Activated CD8-positive, alpha-beta T cell treated with anti-CD3 and anti-CD28 coated beads for 36 hours (primary cell): ENCODE measurements at regions of chr2 and their contacts with region 1.

Region 1: DNA sequence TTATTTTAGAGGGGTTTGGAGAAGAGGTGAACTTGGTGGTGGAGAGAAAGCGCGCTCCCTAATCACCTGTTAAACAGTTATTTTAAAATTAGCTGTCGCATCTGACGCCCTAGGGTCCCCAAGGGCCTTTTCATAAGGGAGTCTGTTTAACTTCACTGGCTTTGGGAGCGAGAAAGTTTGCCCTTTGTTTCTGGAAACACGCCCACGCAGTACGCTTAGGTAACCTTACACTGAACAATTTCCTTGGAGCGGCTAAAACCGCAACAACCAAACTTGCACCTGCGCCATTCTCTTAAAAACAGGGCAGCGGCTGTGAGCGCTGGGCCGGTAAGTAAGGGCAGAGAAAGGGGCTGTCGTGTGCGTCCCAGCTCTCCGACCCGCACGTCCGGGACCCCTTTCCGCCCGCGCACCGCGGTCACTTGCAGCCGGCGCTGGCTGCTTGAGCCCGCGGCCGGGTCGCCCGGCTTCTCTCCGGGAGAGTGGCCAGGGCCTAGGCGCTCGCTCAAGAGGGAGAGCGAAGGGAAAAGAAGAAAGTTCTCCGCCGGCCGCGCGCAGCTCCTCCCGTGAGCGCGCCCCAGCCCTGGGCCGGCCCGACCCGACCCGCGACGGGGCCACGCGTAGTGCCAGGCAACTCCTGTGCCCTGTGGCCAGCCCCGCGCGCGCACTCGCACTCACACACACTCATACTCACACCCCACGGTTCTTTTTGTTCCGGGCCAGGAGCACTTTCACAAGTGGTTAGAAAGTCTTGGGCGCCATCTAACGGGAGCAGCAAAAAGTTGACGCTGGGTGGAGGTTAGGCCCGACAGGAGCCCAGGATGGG is 19.2 kb downstream of the POU3F3 start:
- DNase-seq: peak; percentile 70
- ATAC-seq: peak; percentile 87
- H3K4me3 Mint-ChIP-seq: peak overlapping the region; percentile 56
- H3K27ac Mint-ChIP-seq: no peak overlapping the region
- H3K4me1 Mint-ChIP-seq: peaks cover 12% of the 10 kb centered on the region
- H3K27me3 Mint-ChIP-seq: peaks cover 66% of the 10 kb centered on the region
- CTCF ChIP-seq: peak; percentile 62

Region 2: DNA sequence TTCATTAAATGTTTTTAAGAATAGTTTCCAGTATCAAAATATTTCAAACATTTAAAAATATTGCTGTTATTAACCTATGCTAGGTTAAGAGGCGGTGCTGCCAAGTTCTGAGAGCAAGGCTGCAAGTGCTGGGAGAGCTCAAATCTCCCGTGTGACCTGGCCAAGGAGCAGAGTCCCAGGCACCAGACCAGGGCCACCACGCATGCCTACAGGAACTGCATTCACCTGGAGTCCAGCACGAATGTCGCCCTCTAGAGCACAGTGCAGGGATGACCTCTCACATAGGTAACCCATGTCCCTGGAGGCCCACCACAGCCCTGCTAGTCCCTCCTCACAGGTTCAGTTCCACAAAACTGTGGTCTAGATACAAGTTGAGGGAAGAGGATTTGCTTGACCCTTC is 139.5 kb before region 1 on chr2:
- CTCF ChIA-PET with region 1: no interaction called
- POLR2A ChIA-PET with region 1: no interaction called
- intact Hi-C with region 1: loop called (anchors 5 kb)
- DNase-seq: peak; percentile 61
- ATAC-seq: peak; percentile 54
- H3K4me3 Mint-ChIP-seq: no peak overlapping the region
- H3K27ac Mint-ChIP-seq: no peak overlapping the region
- H3K4me1 Mint-ChIP-seq: peaks cover 11% of the 10 kb centered on the region
- H3K27me3 Mint-ChIP-seq: no peaks in the 10 kb centered on the region
- CTCF ChIP-seq: peak; percentile 37